HAP-1 (cell line): ENCODE measurements at regions of chr15 and their contacts with region 1.

Region 1: GRCh38 chr15:48285329-48286214 is 45.7 kb upstream of the DUT start:
- DNase-seq: peak; percentile 71 to 80
- H3K4me3 ChIP-seq: peak overlapping the region; percentile 9; the same call in 1 of the 2 replicates
- H3K4me1 ChIP-seq: peaks cover 17% of the 10 kb centered on the region
- H3K27me3 ChIP-seq: no peaks in the 10 kb centered on the region

Region 2: DNA sequence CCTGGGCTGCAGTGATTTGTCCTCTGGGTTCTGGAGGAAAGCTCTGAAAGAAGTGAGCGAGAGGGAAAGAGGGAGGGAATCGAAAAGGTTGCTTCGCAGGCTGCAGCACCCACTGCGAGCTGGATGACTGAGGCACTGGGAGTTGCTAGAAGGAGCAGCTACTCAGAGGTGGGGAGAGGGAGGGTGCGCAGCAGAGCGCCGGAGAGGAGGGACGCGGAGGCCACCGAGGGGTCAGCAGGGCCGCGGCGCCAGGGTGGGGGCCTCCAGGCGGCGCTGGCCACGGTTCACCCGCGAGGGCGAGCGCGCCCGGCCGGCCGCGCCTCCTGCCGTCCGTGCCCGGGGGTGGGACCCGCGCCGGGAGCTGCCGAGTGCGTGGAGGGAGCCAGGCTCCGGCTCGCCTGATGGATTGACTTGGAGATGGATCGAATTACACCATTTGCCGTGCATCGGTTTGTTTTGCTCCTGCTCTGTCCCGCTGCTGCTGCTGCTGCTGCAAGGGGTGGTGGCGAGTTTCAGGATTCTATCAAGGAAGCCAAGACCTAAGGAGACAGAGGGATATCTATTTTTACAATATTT is 568.4 kb before region 1 on chr15 and contains the start of gene SEMA6D:
- in situ Hi-C with region 1: loop called (anchors 25 kb)
- DNase-seq: peak; percentile 87 to 90
- H3K4me3 ChIP-seq: peak within 1 kb of the TSS; percentile 53
- H3K4me1 ChIP-seq: peaks cover 29% of the 10 kb centered on the region
- H3K27me3 ChIP-seq: no peaks in the 10 kb centered on the region

Region 3: DNA sequence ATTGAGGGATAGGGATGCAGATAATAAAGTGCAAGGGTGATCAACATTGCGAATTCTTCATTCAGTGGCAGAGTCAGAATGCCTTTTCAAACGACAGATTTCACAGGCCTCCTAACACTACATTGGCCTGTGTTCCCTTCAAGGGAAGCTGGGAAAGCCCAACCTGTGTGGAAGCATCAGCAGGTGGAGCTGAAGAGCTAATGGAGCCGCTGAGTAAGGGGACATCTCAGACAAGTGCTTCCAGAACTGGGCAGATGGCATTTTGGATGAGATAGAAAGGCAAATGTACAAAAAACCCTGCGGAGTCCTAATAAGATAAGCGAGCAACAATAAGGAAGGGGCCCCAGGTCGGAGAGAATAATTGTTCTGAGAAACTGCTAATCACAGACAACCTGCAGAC is 173.3 kb before region 1 on chr15:
- in situ Hi-C with region 1: loop called (anchors 25 kb)
- DNase-seq: peak; percentile 28 to 55
- H3K4me3 ChIP-seq: no peak overlapping the region
- H3K4me1 ChIP-seq: no peaks in the 10 kb centered on the region
- H3K27me3 ChIP-seq: peaks cover 8% of the 10 kb centered on the region; the same call in 1 of the 2 replicates

Region 4: DNA sequence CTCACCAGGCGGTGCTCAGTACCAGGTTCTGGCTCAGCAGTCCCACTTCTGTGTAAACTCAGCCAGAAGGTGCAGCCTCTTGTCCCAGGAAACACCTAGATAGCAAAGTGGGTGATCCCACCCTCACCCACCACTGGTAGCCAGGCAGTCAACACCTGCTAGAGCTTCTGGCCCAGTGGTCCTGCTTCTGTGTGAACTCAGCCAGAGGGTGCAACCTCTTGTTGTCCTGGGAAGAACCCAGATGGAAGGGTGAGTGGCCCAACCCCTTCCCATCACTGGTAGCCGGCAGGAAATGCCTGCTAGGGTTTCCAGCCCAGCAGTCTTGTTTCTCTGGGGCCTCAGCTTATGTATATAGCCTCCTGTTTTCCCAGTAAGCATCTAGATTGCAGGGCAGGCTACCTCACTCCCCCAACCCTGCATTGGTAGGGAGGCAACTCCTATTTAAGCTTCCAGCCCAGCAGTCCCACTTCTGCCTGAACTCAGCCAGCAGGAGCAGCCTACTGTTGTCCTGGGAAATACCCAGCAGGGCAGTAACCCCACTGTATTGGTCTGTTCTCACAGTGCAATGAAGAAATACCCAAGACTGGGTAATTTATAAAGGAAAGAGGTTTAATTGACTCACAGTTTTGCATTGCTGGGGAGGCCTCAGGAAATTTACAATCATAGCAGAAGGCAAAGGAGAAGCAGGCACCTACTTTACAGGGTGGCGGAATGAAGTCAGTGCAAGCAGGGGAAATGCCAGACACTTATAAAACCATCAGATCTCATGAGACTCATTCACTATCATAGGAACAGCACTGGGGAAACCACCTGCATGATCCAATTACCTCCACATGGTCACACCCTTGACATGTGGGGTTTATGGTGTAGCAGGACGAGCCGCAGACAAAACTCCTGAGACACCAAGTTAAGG is 1445.9 kb after region 1 on chr15:
- in situ Hi-C with region 1: no loop called
- DNase-seq: no peak
- H3K4me3 ChIP-seq: no peak overlapping the region
- H3K4me1 ChIP-seq: no peaks in the 10 kb centered on the region; the same call in 1 of the 2 replicates
- H3K27me3 ChIP-seq: no peaks in the 10 kb centered on the region